ENCODE measurements at regions of chr16 and their contacts with region 1.

Region 1: DNA sequence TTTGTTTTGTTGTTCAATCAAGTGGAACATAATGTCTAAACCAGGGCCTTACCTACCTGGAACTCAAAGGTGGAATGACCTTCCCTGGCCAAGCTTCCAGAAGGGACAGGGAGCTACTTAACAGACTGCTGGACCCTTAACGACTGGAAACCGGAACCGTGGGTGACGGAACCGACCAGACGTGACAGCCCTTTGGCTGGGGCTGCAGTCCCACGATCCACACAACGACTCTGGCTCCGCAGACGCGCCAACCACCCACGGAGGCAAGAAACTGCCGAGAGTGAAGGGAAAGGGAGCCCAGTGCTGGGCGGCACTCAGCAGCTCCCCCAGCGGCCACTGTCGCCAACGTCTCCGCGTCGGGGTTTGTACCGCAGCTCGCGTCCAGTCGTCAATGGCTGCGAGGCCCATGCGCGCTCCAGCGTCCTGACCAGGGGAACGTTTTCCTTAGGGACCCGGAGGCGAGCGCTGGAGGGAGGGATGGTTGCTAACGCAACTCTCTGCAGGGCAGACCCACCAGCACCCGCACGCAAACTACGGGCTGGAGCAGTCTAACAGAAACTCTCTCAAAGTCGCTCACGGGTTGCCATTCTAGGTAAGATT is 5.5 kb upstream of the KIF22 start:
- DNase-seq: peak; percentile 89
- ATAC-seq: peak; percentile 79
- H3K4me3 Mint-ChIP-seq: peak overlapping the region; percentile 51
- H3K27ac Mint-ChIP-seq: no peak overlapping the region
- H3K4me1 Mint-ChIP-seq: peaks cover 29% of the 10 kb centered on the region
- H3K27me3 Mint-ChIP-seq: no peaks in the 10 kb centered on the region

Region 2: GRCh38 chr16:29757950-29758466 is 27.0 kb before region 1 on chr16:
- CTCF ChIA-PET with region 1: interaction called, 16 read pairs
- POLR2A ChIA-PET with region 1: interaction called, 6 read pairs
- intact Hi-C with region 1: loop called in 1 of 2 experiments (anchors 2 kb)
- DNase-seq: no peak
- ATAC-seq: no peak
- H3K4me3 Mint-ChIP-seq: no peak overlapping the region
- H3K27ac Mint-ChIP-seq: no peak overlapping the region
- H3K4me1 Mint-ChIP-seq: peaks cover 32% of the 10 kb centered on the region
- H3K27me3 Mint-ChIP-seq: no peaks in the 10 kb centered on the region

Region 3: GRCh38 chr16:30567991-30568638 is 783.1 kb after region 1 on chr16:
- CTCF ChIA-PET with region 1: no interaction called
- POLR2A ChIA-PET with region 1: no interaction called
- intact Hi-C with region 1: no loop called
- DNase-seq: peak; percentile 74
- ATAC-seq: peak; percentile 52
- H3K4me3 Mint-ChIP-seq: peak overlapping the region; percentile 63
- H3K27ac Mint-ChIP-seq: peak overlapping the region; percentile 98
- H3K4me1 Mint-ChIP-seq: peaks cover 45% of the 10 kb centered on the region
- H3K27me3 Mint-ChIP-seq: no peaks in the 10 kb centered on the region

Measured in activated CD4-positive, alpha-beta T cell treated with anti-CD3 and anti-CD28 coated beads for 36 hours (primary cell).